ENCODE measurements at regions of chr17 and their contacts with region 1.

Region 1: DNA sequence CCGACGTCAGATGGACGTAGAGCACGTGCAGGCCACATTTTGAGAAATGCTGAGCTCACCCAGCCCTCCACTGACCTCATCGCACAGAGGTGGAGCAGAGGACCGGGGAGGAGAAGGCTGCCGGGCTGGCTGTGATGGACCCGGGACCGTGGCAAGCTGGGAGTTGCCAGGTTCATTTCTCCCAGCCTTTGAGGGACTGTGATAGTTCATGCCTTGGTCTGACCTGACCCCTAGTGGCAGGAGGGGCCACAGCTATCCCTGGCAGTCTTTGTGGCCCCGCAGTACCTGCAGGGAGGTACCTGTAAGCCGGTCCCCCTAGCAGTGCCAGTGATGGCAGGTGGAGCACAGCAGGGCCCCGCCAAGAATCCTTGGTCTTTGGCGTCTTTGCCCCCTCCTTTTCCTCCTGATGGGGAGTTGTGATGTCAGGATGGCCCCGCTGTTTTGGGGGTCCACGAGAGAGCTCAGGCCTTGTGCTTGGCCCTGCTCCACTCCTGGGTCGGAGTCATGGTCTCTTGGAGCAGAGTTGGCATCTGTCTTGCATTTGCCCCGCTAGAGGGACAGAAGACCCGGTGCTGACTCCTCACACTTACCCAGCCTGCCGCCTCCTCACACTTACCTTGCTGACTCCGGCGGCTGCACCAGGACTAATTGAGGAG is 50.4 kb downstream of the OR1D5 start:
- H3K4me3 ChIP-seq: no peak overlapping the region
- H3K27ac ChIP-seq: no peak overlapping the region
- H3K4me1 ChIP-seq: no peaks in the 10 kb centered on the region
- CTCF ChIP-seq: peak; percentile 84

Region 2: DNA sequence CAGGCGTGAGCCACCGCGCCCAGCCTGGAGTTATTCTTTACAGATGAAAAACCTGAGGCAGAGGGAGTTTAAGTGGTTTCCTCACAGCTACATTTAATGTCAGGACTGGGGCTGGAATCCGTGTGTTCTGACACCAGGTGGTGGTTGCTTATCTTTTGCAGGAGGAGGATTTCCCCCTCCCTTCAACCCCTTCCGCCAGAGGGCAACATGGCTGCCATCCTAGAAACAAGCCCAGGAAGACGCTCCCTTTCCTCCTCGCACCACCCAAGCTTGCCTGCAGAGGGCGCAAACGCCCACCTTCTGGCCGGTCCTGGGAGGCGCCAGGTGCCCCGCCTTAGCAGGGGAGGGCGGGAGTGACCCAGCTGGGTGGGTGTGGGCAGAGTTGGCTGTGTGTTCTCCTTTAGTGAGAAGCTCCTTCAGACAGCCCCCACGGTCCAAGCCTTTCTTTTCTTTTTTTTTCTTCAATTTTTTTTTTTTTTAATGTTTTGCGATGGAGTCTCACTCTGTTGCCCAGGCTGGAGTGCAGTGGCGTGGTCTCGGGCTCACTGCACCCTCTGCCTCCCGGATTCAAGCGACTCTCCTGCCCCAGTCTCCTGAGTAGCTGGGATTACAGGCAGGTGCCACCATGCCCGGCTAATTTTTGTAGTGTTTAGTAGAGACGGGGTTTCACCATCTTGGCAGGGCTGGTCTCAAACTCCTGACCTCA is 226.7 kb before region 1 on chr17:
- CTCF ChIA-PET with region 1: interaction called, 14 read pairs
- POLR2A ChIA-PET with region 1: interaction called, 3 read pairs
- H3K4me3 ChIP-seq: no peak overlapping the region
- H3K27ac ChIP-seq: no peak overlapping the region
- H3K4me1 ChIP-seq: no peaks in the 10 kb centered on the region
- CTCF ChIP-seq: peak; percentile 96

Region 3: DNA sequence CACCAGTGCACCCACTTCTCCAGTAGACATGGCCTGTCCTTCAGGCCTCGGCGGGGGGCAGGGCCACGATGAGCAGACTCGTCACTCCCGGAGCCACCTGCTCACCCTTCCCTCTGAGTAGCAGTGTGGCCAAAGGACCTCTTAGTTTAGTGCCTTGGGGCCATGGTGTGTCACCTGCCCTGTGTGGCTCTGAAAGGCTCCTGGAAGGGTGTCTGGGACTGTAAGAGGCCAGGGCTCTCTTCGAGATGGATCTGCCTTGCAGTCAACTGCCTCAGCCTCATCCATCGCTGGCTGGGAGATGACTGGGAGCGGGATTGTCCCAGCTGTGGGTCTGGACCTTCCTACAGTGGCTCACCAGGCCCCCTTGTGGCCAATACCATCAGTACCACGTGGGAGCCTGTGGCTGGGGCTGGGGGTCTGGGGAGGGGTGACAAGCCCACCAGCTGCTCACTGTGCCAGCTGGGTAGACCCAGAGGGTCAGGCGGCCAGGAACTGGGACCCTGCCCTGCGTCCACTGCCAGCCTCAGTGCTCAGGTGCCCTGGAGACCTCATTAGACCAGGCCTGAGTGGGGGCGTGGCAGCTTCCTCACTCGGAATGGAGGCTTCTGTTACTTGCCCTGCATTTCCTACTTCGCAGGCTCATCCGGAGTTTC is 83.0 kb before region 1 on chr17:
- CTCF ChIA-PET with region 1: interaction called, 10 read pairs
- POLR2A ChIA-PET with region 1: no interaction called
- H3K4me3 ChIP-seq: no peak overlapping the region
- H3K27ac ChIP-seq: no peak overlapping the region
- H3K4me1 ChIP-seq: no peaks in the 10 kb centered on the region
- CTCF ChIP-seq: no peak

Region 4: DNA sequence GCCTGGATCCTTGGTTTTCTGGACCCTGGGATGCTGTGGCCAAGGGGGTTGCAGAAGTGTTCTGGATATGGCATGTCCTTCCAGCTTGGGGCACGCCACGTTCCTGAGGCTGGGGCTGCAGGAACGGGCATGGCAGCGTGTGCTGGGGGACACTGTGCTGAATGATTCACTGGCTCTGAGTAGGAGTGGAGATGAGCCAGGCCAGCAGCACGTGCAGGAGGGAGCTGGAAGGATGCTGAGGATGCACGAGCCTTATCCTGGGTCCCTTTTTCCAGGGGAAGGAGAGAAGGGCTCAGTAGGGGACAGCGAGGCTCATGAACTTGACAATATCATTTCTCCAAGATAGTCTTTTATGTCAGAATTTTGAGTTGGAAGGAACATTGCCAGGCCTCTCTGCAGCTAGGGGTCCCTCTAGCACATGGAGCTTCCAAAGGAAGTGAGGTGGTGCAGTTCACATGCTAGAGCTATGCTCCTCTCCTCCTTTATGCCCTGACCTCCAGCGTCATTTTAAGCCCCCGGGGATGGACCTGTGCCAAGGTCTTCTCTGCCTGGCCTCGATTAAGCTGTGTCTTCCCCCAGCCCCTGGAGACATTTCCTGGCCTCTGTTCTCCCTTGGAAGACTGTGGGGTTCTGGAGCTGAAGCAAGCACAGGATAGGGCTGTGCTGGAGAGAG is 75.6 kb before region 1 on chr17:
- CTCF ChIA-PET with region 1: interaction called, 10 read pairs
- POLR2A ChIA-PET with region 1: no interaction called
- H3K4me3 ChIP-seq: no peak overlapping the region
- H3K27ac ChIP-seq: no peak overlapping the region
- H3K4me1 ChIP-seq: no peaks in the 10 kb centered on the region
- CTCF ChIP-seq: no peak

Region 5: GRCh38 chr17:2952174-2952836 is 60.7 kb before region 1 on chr17:
- CTCF ChIA-PET with region 1: no interaction called
- POLR2A ChIA-PET with region 1: no interaction called
- H3K4me3 ChIP-seq: no peak overlapping the region
- H3K27ac ChIP-seq: no peak overlapping the region
- H3K4me1 ChIP-seq: peaks cover 3% of the 10 kb centered on the region; the same call in 1 of the 2 replicates
- CTCF ChIP-seq: no peak

Region 6: DNA sequence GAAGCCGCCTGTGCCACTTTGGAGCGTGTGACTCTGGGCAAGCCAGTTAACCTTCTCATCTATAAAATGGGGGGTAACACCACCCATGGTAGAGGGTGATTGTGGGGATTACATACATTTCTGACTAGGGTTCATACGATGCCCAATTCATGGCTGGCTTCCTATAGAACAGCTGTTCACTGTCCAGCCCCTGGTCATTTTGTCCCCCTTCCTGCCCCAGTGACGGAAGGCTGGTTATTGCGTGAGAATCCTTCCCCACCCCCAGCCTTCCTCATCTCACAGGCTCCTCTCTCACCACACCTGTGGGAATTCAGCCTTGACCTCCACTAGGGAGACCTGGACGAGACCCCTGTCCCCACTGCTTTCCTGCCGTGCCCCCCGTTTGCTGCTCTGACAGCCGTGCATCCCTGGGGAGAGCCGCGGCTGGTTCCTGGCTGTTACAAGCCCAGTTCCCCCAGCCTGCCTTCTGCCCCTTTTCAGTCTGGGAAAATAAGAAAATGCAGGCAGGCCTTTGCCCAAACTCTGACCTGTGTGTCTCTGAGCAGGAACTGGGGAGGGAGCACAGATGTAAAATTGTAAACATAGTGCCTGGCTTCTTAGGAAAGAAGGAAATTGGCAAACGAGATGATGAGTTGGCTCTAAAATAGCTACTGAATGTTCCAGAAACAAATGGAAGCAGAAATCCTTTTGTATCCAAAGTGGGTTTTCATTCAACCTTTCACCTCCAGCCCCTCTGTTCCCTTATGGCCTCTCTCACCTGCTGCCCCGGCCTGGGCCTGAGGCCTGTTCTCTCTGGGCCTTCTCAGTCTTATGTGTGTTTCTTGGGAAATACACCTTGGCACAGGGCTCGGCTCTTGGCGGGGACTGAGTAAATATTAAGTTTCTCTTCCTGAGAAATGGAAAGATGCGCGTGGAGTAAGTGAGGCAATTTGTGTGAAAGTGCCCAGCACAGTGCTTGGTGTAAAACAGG is 16.9 kb before region 1 on chr17:
- CTCF ChIA-PET with region 1: no interaction called
- POLR2A ChIA-PET with region 1: no interaction called
- H3K4me3 ChIP-seq: no peak overlapping the region
- H3K27ac ChIP-seq: no peak overlapping the region
- H3K4me1 ChIP-seq: no peaks in the 10 kb centered on the region
- CTCF ChIP-seq: no peak

Region 7: DNA sequence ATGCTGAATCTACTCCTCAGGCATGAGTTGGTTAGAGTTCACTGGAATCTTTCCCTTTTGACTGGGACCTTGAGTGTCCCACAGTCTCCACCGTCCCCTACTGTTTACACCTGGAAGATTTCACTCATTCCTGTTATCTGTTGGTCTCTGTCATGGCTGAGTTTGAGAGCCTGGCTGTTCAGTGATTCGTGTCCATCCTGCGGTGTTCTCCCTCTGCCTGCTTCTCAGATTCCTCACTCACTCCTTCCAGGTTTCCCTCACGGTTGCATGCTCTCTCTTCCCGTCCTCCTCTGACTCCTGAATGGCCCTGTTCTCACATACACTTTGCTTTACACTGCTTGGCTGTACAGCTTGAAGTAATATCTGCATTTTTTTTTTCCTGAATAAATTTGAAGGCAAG is 25.9 kb after region 1 on chr17:
- CTCF ChIA-PET with region 1: no interaction called
- POLR2A ChIA-PET with region 1: no interaction called
- H3K4me3 ChIP-seq: no peak overlapping the region
- H3K27ac ChIP-seq: no peak overlapping the region
- H3K4me1 ChIP-seq: no peaks in the 10 kb centered on the region
- CTCF ChIP-seq: no peak